ENCODE measurements at regions of chr10 and their contacts with region 1.

Region 1: GRCh38 chr10:101060036-101060950 is 1.5 kb upstream of the KAZALD1 start:
- DNase-seq: peak; percentile 96
- ATAC-seq: peak; percentile 33
- H3K4me3 ChIP-seq: peak overlapping the region; percentile 82 to 97 (median 87)
- H3K27ac ChIP-seq: peak overlapping the region; percentile 99
- H3K4me1 ChIP-seq: peaks cover 71% of the 10 kb centered on the region
- H3K27me3 ChIP-seq: no peaks in the 10 kb centered on the region; a peak in 1 of 5 replicates
- CTCF ChIP-seq: peak; percentile 89
- EP300 ChIP-seq: no peak
- POLR2A ChIP-seq: peak in 1 of 2 experiments; percentile 45; a peak in 1 of 4 replicates
- RAD21 ChIP-seq: peak; percentile 88

Region 2: DNA sequence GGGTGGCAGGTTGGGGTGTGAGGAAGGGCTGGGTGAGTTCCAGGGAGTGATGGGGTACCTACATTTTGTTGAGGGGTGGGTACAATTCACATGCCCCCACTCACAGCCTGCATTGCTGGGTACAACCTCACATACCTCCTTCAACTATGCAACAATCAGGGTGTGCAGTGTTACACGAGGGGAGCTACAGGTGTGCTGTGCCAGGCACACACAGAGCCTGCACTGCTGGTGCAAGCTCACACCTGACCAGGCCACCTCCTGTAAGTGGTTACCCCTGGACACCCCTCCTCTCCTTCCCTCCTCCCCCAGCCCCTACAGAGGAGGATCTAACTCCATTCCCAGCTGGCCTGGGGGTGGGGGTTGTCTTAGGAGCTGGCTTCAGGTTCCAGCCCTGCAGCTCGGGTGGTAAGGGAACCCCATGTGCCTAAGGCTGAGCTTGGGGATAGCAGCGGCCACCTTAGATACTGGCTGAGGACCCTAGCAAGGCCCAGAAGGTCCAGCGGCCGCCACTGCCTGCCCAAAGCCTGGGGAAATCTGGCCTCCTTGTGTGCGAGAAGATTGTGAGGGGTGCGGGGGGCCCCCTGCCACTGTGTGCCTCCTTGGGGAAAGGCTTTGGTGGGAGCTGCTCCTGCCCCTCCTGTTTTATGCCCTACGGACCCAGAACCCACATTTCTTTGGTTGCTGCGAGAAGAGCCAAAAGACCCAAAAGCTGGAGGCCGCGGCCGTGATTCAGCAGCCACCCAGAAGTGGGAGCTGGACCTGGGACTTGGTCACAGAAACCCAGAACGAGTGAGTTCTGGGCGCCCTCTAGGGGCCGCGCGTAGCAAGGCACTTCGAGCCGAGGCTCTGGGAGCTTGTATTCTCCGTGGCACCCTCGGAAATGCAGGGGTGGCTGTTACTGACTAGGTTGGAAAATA is 81.6 kb after region 1 on chr10:
- CTCF ChIA-PET with region 1: interaction called, 7 read pairs
- POLR2A ChIA-PET with region 1: interaction called, 20 read pairs
- in situ Hi-C with region 1: no loop called
- intact Hi-C with region 1: no loop called
- DNase-seq: peak; percentile 71
- ATAC-seq: peak; percentile 90
- H3K4me3 ChIP-seq: peak overlapping the region; percentile 27 to 71 (median 52)
- H3K27ac ChIP-seq: no peak overlapping the region
- H3K4me1 ChIP-seq: peaks cover 24% of the 10 kb centered on the region
- H3K27me3 ChIP-seq: peaks cover 12 to 66% of the 10 kb centered on the region in 2 experiments
- CTCF ChIP-seq: peak; percentile 95
- EP300 ChIP-seq: no peak
- POLR2A ChIP-seq: no peak
- RAD21 ChIP-seq: peak; percentile 95

Measured in HepG2 (cell line).